CD8-positive, alpha-beta memory T cell (primary cell): ENCODE measurements at regions of chr13 and their contacts with region 1.

Region 1: DNA sequence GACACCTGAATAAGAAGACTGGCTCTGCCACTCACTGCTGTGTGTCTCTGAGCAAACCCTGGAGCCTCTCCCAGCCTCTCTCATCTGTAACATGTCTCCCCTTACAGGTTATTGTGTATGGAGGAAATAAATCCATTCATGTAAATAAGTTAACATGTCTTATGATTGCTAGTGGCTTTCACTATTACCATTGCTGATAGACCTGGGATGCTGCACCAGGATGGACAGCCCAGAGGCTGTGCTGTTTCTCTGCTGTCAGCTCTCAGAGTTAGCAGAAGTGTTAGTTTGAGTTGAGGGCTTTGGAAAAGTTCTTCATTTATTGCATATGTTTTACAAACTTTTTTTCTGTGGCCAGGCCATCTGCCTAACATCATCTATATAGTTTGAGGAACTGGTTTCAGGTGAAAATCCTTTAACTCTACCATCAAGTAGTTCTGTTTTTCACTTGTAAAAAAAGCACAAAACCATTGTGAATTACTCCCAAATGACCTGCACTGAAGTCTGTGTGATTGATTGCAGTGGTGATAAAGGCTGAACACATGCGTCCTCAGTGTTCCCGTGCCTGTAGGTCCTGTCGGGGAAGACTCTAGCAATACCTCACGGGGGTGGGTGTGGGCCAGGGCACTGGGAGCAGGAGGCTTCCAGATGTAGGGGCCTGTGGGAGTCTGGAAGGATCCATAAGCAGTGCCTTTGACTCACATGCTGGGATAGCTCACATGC is 24.6 kb downstream of the MPHOSPH8 start:
- DNase-seq: no peak
- H3K4me3 ChIP-seq: no peak overlapping the region
- H3K4me3 Mint-ChIP-seq: no peak overlapping the region
- H3K27ac ChIP-seq: no peak overlapping the region
- H3K27ac Mint-ChIP-seq: peak overlapping the region in 7 of 8 donors; percentile 14 to 62 (median 39)
- H3K4me1 ChIP-seq: no peaks in the 10 kb centered on the region
- H3K4me1 Mint-ChIP-seq: peaks cover 4 to 10% (median 9%) of the 10 kb centered on the region in 3 donors
- H3K27me3 ChIP-seq: no peaks in the 10 kb centered on the region
- H3K27me3 Mint-ChIP-seq: no peaks in the 10 kb centered on the region

Region 2: GRCh38 chr13:19633479-19634255 is 24.4 kb before region 1 on chr13 and contains the start of gene MPHOSPH8:
- CTCF ChIA-PET with region 1: no interaction called
- POLR2A ChIA-PET with region 1: interaction called, 10 read pairs
- DNase-seq: peak; percentile 89 to 95 (median 92)
- H3K4me3 ChIP-seq: peak within 1 kb of the TSS; percentile 97
- H3K4me3 Mint-ChIP-seq: peak within 1 kb of the TSS; percentile 100
- H3K27ac ChIP-seq: peak within 1 kb of the TSS; percentile 94
- H3K27ac Mint-ChIP-seq: peak within 1 kb of the TSS; percentile 90 to 100 (median 100)
- H3K4me1 ChIP-seq: peaks cover 27% of the 10 kb centered on the region
- H3K4me1 Mint-ChIP-seq: peaks cover 36 to 44% (median 41%) of the 10 kb centered on the region in 3 donors
- H3K27me3 ChIP-seq: no peaks in the 10 kb centered on the region
- H3K27me3 Mint-ChIP-seq: peaks cover 0 to 5% of the 10 kb centered on the region in 2 donors
- total RNA-seq, gene MPHOSPH8: 40.8 to 41.0 TPM